ENCODE measurements at regions of chr19 and their contacts with region 1.

Region 1: GRCh38 chr19:33778089-33778791 is 18.4 kb upstream of the KCTD15 start:
- DNase-seq: peak; percentile 93
- ATAC-seq: peak; percentile 94

Region 2: GRCh38 chr19:33815380-33816340 is 37.4 kb after region 1 on chr19:
- intact Hi-C with region 1: no loop called
- DNase-seq: no peak
- ATAC-seq: no peak

Region 3: DNA sequence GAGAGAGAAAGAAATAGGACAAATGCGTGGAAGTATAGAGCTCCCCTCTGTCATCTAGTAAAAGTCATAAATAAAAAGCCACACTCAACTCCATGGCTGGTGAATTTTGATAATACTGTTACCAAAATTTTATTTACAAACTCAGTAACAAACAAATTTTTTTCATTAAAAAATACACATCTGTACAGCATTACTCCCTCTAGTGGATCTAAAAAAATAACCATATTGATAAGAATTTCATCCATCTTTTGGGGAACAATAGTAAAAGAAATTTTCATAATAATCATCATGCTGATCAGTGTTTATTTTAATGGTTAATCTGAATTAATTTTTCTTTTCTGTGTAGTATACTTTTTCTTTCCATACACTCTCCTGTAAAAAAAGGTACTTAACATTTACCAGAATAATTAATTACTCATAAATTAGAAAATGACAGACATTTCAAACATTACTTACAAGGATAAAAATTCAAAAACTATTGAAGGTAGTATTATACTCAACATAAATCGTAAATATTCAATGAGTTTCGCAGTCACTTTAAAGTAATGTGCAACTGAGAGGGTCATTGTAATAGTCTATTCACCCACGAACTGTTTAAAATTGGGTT is 220.6 kb after region 1 on chr19:
- intact Hi-C with region 1: loop called (anchors 5 kb)
- DNase-seq: no peak
- ATAC-seq: no peak

Region 4: GRCh38 chr19:34096020-34096915 is 318.0 kb after region 1 on chr19:
- intact Hi-C with region 1: loop called (anchors 5 kb)
- DNase-seq: no peak
- ATAC-seq: peak; percentile 34